ENCODE measurements at regions of chr9 and their contacts with region 1.

Region 1: DNA sequence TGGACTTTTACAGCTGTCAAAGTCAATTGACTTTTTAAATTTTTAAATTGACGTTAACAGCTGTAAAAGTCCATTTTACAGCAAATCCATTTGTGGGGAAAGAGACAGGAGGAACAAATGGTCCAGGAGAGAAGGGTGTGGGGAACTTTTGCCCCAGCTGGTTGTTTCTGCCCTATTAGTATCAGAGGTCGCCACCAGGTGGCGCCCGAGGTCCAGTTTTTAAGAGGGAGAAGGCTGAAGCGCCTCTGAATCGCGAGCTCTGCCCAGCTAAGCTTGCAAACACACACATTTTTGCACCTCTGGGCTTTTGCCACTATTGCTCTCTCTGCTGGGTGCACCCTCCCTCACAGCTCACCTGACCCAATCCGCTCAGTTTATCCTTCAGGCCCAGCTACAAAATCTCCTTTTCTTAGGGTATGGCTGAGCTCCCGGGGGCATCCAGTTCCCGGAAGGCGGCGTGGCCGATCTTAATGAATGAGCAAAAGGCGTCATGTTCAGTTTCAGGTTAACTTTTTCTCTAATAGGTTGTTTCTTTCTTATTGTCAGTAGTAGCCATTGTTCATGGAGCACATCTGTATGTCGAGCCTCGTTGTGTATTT is 6.3 kb upstream of the TTLL11 start:
- H3K4me3 ChIP-seq: no peak overlapping the region
- H3K27ac ChIP-seq: no peak overlapping the region
- H3K4me1 ChIP-seq: no peaks in the 10 kb centered on the region
- CTCF ChIP-seq: peak; percentile 27; the same call in 1 of the 2 replicates

Region 2: GRCh38 chr9:122087406-122088200 is 11.8 kb before region 1 on chr9:
- CTCF ChIA-PET with region 1: interaction called, 48 read pairs
- POLR2A ChIA-PET with region 1: no interaction called
- H3K4me3 ChIP-seq: no peak overlapping the region
- H3K27ac ChIP-seq: no peak overlapping the region
- H3K4me1 ChIP-seq: no peaks in the 10 kb centered on the region
- CTCF ChIP-seq: no peak

Region 3: DNA sequence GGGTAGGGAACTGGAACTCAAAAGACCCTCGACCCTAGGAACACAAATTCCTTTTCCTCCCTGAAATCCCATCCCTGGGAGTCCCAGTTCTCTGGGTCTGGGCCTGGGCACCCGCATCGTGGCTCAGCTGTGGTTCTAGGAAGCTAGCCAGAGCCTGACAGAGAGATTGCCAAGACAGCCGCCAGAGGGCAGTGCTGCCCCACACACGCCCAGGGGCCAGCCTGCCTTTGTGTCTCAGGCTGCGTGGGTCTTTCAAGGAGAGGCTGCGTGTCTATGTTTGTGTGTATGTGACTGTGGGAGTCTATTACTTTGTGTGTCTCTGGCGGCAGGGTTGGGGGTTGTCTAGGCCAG is 25.8 kb after region 1 on chr9:
- CTCF ChIA-PET with region 1: interaction called, 371 read pairs
- POLR2A ChIA-PET with region 1: interaction called, 4 read pairs
- H3K4me3 ChIP-seq: no peak overlapping the region
- H3K27ac ChIP-seq: no peak overlapping the region
- H3K4me1 ChIP-seq: no peaks in the 10 kb centered on the region
- CTCF ChIP-seq: peak; percentile 75

Region 4: DNA sequence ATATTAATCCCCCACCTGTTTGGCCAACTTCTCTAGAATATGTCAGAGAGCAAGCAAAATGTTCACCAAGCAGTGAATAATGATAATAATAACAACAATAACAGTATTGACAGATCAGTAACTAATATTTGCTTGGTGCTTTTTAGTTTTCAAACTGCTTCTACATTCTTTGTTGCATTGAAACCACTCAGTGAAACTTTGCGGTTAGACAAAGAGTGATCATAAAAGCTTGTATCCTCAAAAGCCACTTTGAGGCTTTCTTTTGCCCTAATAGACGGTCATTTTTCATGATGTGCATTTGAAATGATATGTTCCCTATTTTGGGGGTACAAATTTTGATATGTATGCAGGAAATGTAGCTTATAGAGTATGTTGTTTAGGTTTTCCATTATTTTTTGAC is 227.8 kb after region 1 on chr9:
- CTCF ChIA-PET with region 1: interaction called, 22 read pairs
- POLR2A ChIA-PET with region 1: no interaction called
- H3K4me3 ChIP-seq: no peak overlapping the region
- H3K27ac ChIP-seq: no peak overlapping the region
- H3K4me1 ChIP-seq: no peaks in the 10 kb centered on the region
- CTCF ChIP-seq: no peak

Region 5: DNA sequence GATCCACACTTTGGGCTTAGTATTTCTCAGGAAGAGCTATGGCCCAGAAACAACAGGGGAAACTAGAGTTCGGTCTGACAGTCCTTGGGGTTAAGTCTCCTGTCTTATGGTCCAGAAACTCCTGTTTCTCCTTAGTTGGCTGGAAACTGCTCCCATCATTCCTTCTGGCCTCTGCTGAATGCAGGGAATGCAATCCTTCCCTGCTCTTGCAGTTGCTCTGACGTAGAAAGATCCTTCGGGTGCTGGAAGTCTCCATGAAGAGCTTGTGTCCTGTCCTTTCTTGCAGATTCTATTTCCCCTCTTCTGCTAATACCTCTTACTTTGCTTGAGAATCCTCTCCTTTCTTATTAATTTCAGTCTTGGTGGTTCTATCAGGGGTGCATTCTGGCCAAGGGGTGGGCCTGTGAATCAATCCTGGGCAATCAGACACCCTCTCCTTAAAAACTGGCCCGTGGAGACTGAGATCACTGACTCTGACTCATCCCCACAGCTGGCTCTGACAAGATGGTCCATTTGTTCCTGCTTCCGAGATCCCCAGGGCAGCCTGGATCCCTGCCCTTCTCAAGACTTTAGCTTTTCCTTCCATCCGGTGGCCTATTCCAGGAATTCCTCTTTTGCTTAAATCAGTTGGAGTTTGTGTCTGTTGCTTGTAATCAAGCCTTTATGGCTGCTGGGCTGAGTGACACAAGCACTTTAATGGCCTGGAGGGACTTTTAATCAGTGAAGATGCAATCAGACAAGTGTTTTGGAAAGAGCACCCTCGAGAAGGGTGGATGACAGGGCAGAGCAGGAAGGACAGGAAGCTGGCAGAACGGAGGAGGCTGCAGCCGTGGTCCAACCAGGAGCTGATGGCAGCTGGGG is 295.1 kb after region 1 on chr9:
- CTCF ChIA-PET with region 1: interaction called, 13 read pairs
- POLR2A ChIA-PET with region 1: no interaction called
- H3K4me3 ChIP-seq: no peak overlapping the region
- H3K27ac ChIP-seq: no peak overlapping the region
- H3K4me1 ChIP-seq: no peaks in the 10 kb centered on the region
- CTCF ChIP-seq: no peak

Region 6: GRCh38 chr9:122464633-122465567 is 365.5 kb after region 1 on chr9:
- CTCF ChIA-PET with region 1: interaction called, 11 read pairs
- POLR2A ChIA-PET with region 1: no interaction called
- H3K4me3 ChIP-seq: no peak overlapping the region; the same call in 1 of the 2 replicates
- H3K27ac ChIP-seq: no peak overlapping the region
- H3K4me1 ChIP-seq: no peaks in the 10 kb centered on the region
- CTCF ChIP-seq: peak; percentile 36; the same call in 1 of the 2 replicates